HEK293 (cell line): ENCODE measurements at regions of chr15 and their contacts with region 1.

Region 1: GRCh38 chr15:63487076-63487757 is 17.2 kb upstream of the USP3 start:
- H3K4me3 ChIP-seq: no peak overlapping the region
- H3K27ac ChIP-seq: no peak overlapping the region
- H3K4me1 ChIP-seq: peaks cover 5% of the 10 kb centered on the region
- CTCF ChIP-seq: peak; percentile 65

Region 2: GRCh38 chr15:63466378-63467192 is 20.6 kb before region 1 on chr15:
- CTCF ChIA-PET with region 1: interaction called, 16 read pairs
- POLR2A ChIA-PET with region 1: no interaction called
- H3K4me3 ChIP-seq: no peak overlapping the region
- H3K27ac ChIP-seq: no peak overlapping the region
- H3K4me1 ChIP-seq: no peaks in the 10 kb centered on the region; the same call in 1 of the 2 replicates
- CTCF ChIP-seq: no peak; the same call in none of the 2 replicates

Region 3: GRCh38 chr15:63497642-63498467 is 10.6 kb after region 1 on chr15:
- CTCF ChIA-PET with region 1: interaction called, 19 read pairs
- POLR2A ChIA-PET with region 1: interaction called, 4 read pairs
- H3K4me3 ChIP-seq: no peak overlapping the region
- H3K27ac ChIP-seq: no peak overlapping the region
- H3K4me1 ChIP-seq: peaks cover 17% of the 10 kb centered on the region
- CTCF ChIP-seq: no peak

Region 4: DNA sequence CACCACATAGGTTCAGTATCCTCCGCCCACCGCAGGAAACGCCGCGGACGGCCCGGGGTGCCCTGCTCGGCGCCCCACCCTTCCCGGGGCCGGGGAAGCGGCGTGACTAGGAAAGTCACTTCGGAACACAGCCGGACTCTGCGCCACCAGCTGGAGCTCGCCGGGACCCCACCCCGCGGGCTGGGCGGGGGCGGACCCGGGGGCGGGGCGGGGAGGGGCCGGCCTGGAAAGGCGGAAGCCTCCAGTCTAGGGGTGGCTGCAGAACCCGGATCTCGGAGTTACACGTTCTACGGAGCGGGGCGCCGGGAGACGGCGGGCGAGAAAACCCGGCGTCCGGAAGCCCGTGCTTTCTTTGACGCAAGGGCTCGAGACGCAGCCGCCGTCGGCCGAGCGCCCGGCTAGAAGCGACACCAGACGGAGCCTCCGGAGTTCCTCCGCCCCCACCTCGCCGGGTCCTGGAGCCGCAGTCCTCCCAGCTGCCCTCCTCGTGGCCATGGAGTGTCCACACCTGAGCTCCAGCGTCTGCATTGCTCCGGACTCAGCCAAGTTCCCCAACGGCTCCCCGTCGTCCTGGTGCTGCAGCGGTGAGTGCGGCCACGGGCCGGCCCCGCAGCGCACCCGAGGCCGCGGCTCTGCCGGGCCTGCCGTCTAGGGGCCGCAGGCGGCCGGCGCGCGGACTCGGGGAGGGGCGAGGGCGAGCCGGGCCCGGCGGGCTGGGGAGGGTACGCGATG is 17.2 kb after region 1 on chr15 and contains the start of gene USP3:
- CTCF ChIA-PET with region 1: interaction called, 6 read pairs
- POLR2A ChIA-PET with region 1: interaction called, 10 read pairs
- H3K4me3 ChIP-seq: peak within 1 kb of the TSS; percentile 80
- H3K27ac ChIP-seq: peak within 1 kb of the TSS; percentile 92
- H3K4me1 ChIP-seq: peaks cover 28% of the 10 kb centered on the region
- CTCF ChIP-seq: no peak

Region 5: GRCh38 chr15:64050281-64051092 is 563.3 kb after region 1 on chr15:
- CTCF ChIA-PET with region 1: no interaction called
- POLR2A ChIA-PET with region 1: no interaction called
- H3K4me3 ChIP-seq: no peak overlapping the region
- H3K27ac ChIP-seq: no peak overlapping the region
- H3K4me1 ChIP-seq: 0 out of 2 replicates have a peak, but pooled peaks cover 3% of the 10 kb centered on the region
- CTCF ChIP-seq: no peak